ENCODE measurements at regions of chr6 and their contacts with region 1.

Region 1: DNA sequence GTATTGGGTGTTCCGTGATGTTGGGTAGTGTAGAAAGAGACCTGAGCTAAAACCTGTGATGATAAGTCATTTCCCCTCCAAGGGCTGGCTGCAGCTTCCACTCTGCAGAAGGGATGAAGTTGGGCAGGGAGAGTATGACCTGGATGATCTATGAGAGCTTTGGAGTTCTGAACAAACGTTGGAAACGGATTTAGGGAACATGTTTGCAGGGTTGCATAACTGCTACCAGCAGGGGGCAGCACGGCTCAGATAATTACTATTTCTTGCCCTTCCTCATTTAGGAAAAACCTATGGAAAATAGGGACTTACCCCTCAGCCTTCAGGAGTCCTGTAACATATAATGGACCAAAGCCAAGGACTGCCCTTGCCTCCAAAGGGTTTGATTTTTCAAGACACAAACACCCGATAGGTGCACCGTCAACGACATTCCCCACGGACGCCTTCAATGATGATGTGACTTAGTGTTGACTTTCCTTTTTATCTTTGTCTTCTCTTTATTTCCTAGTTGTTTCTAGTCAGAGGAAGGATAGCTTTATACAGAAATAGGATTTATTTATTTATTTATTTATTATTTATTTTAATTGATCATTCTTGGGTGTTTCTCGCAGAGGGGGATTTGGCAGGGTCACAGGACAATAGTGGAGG is 164.9 kb upstream of the SASH1 start:
- DNase-seq: peak; percentile 76
- ATAC-seq: peak; percentile 75
- H3K4me3 ChIP-seq: no peak overlapping the region
- H3K27ac ChIP-seq: no peak overlapping the region
- H3K4me1 ChIP-seq: no peaks in the 10 kb centered on the region
- H3K27me3 ChIP-seq: no peaks in the 10 kb centered on the region
- CTCF ChIP-seq: peak; percentile 85

Region 2: GRCh38 chr6:148293181-148293995 is 115.7 kb after region 1 on chr6:
- intact Hi-C with region 1: no loop called
- DNase-seq: no peak
- ATAC-seq: peak; percentile 51
- H3K4me3 ChIP-seq: no peak overlapping the region
- H3K27ac ChIP-seq: no peak overlapping the region
- H3K4me1 ChIP-seq: peaks cover 8% of the 10 kb centered on the region
- H3K27me3 ChIP-seq: no peaks in the 10 kb centered on the region
- CTCF ChIP-seq: no peak

Region 3: DNA sequence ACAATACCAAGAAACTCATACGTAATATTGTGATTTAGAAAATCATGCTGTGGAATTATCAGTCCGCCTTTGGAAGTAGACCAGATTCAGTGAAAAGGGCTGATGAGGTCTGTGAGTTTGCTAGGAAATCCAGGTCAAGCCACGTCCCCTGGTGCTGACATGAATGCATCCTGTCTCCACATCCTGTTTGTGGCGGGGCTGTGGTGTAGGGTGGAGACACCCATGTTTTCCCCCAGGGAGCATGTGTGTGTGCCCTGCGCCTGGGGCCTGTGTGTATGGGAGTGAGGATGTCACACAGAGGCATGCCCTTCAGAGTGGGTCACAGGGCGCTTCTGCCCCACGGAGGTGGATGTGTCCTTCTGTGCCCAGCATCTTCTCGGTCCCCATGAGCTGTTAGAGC is 274.0 kb after region 1 on chr6:
- intact Hi-C with region 1: no loop called
- DNase-seq: no peak
- ATAC-seq: no peak
- H3K4me3 ChIP-seq: no peak overlapping the region
- H3K27ac ChIP-seq: no peak overlapping the region
- H3K4me1 ChIP-seq: peaks cover 15% of the 10 kb centered on the region
- H3K27me3 ChIP-seq: no peaks in the 10 kb centered on the region
- CTCF ChIP-seq: no peak

Region 4: GRCh38 chr6:148464319-148465010 is 286.8 kb after region 1 on chr6:
- intact Hi-C with region 1: loop called (anchors 5 kb)
- DNase-seq: no peak
- ATAC-seq: peak; percentile 89
- H3K4me3 ChIP-seq: no peak overlapping the region
- H3K27ac ChIP-seq: peak overlapping the region; percentile 17
- H3K4me1 ChIP-seq: peaks cover 37% of the 10 kb centered on the region
- H3K27me3 ChIP-seq: no peaks in the 10 kb centered on the region
- CTCF ChIP-seq: peak; percentile 98